CD14-positive monocyte (primary cell): ENCODE measurements at regions of chr1 and their contacts with region 1.

Region 1: GRCh38 chr1:84892705-84893618 is at the start of gene LPAR3:
- DNase-seq: no peak
- H3K4me3 ChIP-seq: peak within 1 kb of the TSS in 1 of 3 experiments; percentile 57
- H3K4me3 Mint-ChIP-seq: peak within 1 kb of the TSS; percentile 52 to 89
- H3K27ac ChIP-seq: no peak within 1 kb of the TSS
- H3K27ac Mint-ChIP-seq: peak within 1 kb of the TSS in 1 of 7 donors; percentile 57
- H3K4me1 ChIP-seq: peaks cover 23 to 30% of the 10 kb centered on the region in 2 donors
- H3K4me1 Mint-ChIP-seq: peaks cover 26% of the 10 kb centered on the region
- H3K27me3 ChIP-seq: peaks cover 47% of the 10 kb centered on the region in 2 donors
- H3K27me3 Mint-ChIP-seq: peaks cover 40 to 59% (median 55%) of the 10 kb centered on the region in 3 donors
- CTCF ChIP-seq: no peak
- polyA plus RNA-seq, gene LPAR3: not detected

Region 2: DNA sequence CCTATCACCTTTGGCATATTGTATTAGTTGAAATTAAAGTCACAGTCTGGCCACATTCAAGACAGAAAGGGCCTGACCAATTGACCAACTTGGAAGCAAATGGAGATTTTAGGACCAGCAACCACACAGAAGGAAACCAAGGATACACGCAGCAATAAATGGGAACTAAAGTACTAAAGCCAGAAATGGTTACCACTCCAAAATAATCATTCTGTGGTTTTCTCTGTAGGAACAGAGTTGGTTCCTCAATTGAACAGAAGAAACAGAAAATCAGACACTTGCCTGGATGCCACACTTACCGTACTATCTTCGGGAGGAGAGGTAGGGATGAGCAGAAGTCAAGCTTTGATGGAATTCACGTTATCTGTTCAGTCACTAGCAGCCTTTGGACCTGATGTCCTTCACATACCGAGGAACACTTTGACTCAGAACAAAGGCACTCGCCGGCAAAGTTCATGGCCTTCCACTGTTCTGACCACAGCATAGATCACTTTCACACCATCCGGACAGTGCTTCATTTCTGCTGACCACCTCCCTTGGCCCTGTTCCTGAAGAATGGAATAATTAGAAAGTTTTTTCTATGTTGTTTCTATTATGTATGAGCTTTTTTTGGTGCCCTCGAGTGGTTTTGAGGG is 96.9 kb before region 1 on chr1:
- intact Hi-C with region 1: loop called in 1 of 2 experiments (anchors 10 kb)
- DNase-seq: peak in 1 of 3 donors; percentile 25
- H3K4me3 ChIP-seq: no peak overlapping the region
- H3K4me3 Mint-ChIP-seq: no peak overlapping the region
- H3K27ac ChIP-seq: no peak overlapping the region
- H3K27ac Mint-ChIP-seq: peak overlapping the region in 2 of 7 donors; percentile 16 to 23
- H3K4me1 ChIP-seq: peaks cover 7 to 8% of the 10 kb centered on the region in 2 donors
- H3K4me1 Mint-ChIP-seq: peaks cover 15% of the 10 kb centered on the region
- H3K27me3 ChIP-seq: no peaks in the 10 kb centered on the region
- H3K27me3 Mint-ChIP-seq: peaks cover 2 to 6% (median 3%) of the 10 kb centered on the region in 3 donors
- CTCF ChIP-seq: no peak

Region 3: GRCh38 chr1:84944767-84945486 is 52.0 kb after region 1 on chr1:
- intact Hi-C with region 1: no loop called
- DNase-seq: peak; percentile 86 to 91 (median 87)
- H3K4me3 ChIP-seq: peak overlapping the region; percentile 61 to 99 (median 79)
- H3K4me3 Mint-ChIP-seq: peak overlapping the region; percentile 79 to 89
- H3K27ac ChIP-seq: peak overlapping the region; percentile 66 to 87
- H3K27ac Mint-ChIP-seq: peak overlapping the region; percentile 89 to 93 (median 92)
- H3K4me1 ChIP-seq: peaks cover 10 to 11% of the 10 kb centered on the region in 2 donors
- H3K4me1 Mint-ChIP-seq: peaks cover 15% of the 10 kb centered on the region
- H3K27me3 ChIP-seq: no peaks in the 10 kb centered on the region
- H3K27me3 Mint-ChIP-seq: peaks cover 1 to 6% (median 4%) of the 10 kb centered on the region in 3 donors
- CTCF ChIP-seq: peak; percentile 99